Heart left ventricle (tissue), 16 donors: ENCODE measurements at regions of chr12 and their contacts with region 1.

Region 1: GRCh38 chr12:20549107-20549719 is 145.9 kb upstream of the SLCO1C1 start:
- DNase-seq: peak in 3 of 5 donors; percentile 29 to 32 (median 31)
- ATAC-seq: peak; percentile 43 to 69 (median 56)
- H3K4me3 ChIP-seq: no peak overlapping the region
- H3K27ac ChIP-seq: peak overlapping the region in 8 of 12 donors; percentile 10 to 69 (median 60)
- H3K4me1 ChIP-seq: peaks cover 0 to 62% (median 20%) of the 10 kb centered on the region in 12 donors
- H3K27me3 ChIP-seq: no peaks in the 10 kb centered on the region
- CTCF ChIP-seq: peak in 11 of 12 donors; percentile 36 to 73 (median 58)
- POLR2A ChIP-seq: no peak

Region 2: DNA sequence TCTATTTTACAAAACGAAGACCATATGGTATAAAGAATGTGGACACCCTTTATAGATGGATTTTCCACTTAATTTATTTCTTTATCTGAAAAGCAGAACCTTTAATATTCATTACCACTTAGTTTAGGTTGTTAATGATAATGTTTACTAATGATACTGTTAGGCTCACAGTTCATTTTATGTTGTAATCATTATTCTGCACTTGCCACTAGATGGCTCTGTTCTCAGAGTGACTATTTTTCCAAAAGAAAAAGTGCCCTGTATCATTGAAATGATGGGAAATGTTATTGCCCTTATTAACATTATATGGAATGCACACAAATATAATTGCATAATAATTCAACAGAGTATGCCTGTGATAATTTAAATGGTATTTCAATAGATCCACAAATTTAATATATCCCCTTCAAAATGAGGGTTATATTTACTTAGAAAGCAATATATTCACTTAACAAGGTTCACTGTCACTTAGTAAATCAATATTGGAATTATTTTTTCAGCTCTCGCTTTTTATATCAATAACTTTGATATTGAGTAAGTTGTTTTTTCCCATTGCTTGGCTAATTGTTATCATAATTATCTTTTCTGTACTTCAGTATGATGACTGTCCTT is 85.2 kb before region 1 on chr12:
- intact Hi-C with region 1: loop called in 1 of 10 experiments (anchors 10 kb)
- DNase-seq: no peak
- ATAC-seq: no peak
- H3K4me3 ChIP-seq: no peak overlapping the region
- H3K27ac ChIP-seq: peak overlapping the region in 5 of 12 donors; percentile 47 to 83 (median 64)
- H3K4me1 ChIP-seq: peaks cover 0 to 68% (median 29%) of the 10 kb centered on the region in 12 donors
- H3K27me3 ChIP-seq: no peaks in the 10 kb centered on the region
- CTCF ChIP-seq: peak; percentile 36 to 77 (median 58)
- POLR2A ChIP-seq: no peak

Region 3: GRCh38 chr12:20477672-20478071 is 71.5 kb before region 1 on chr12:
- intact Hi-C with region 1: loop called in 1 of 10 experiments (anchors 10 kb)
- DNase-seq: no peak
- ATAC-seq: peak in 3 of 4 donors; percentile 27 to 34 (median 29)
- H3K4me3 ChIP-seq: peak overlapping the region in 3 of 12 donors; percentile 3 to 15 (median 6)
- H3K27ac ChIP-seq: peak overlapping the region in 4 of 12 donors; percentile 12 to 41 (median 36)
- H3K4me1 ChIP-seq: peaks cover 0 to 74% (median 26%) of the 10 kb centered on the region in 12 donors
- H3K27me3 ChIP-seq: no peaks in the 10 kb centered on the region
- CTCF ChIP-seq: no peak
- POLR2A ChIP-seq: no peak